ENCODE measurements at regions of chr11 and their contacts with region 1.

Region 1: GRCh38 chr11:58579192-58580129 is 598 bp downstream of the ZFP91 start:
- DNase-seq: peak; percentile 92
- H3K4me3 ChIP-seq: peak overlapping the region; percentile 87
- H3K27ac ChIP-seq: peak overlapping the region; percentile 95
- H3K4me1 ChIP-seq: peaks cover 50% of the 10 kb centered on the region
- CTCF ChIP-seq: peak; percentile 73

Region 2: GRCh38 chr11:57741132-57742086 is 838.1 kb before region 1 on chr11 and contains the start of gene SELENOH:
- CTCF ChIA-PET with region 1: no interaction called
- POLR2A ChIA-PET with region 1: no interaction called
- intact Hi-C with region 1: loop called (anchors 5 kb)
- DNase-seq: peak; percentile 97
- H3K4me3 ChIP-seq: peak within 1 kb of the TSS; percentile 97
- H3K27ac ChIP-seq: peak within 1 kb of the TSS; percentile 77
- H3K4me1 ChIP-seq: peaks cover 20% of the 10 kb centered on the region
- CTCF ChIP-seq: no peak
- total RNA-seq, gene SELENOH: 181 and 229 TPM in 2 replicates

Region 3: DNA sequence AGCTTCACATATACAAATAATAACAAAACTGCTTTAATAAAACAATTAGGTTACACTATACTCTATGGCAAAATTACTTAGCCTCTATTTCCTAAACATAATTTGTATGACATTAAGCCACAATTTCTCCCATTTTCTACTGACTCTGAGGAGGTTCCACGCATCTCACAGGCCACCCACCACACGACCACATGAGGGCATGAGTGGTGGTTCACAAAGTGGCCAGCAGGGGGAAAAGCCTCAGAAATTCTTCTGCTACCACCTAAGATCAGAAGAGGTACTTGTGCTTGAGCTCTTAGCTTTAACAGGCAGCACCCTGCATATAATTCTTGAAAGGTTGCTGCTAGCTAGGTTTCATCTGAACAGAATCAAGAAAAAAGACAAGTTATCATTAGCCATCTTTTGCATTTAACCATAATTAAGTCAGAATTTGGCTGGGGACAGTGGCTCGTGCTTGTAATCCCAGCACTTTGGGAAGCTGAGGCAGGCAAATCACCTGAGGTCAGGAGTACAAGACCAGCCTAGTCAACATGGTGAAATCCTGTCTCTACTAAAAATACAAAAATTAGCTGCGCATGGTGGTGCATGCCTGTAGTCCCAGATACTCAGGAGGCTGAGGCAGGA is 11.5 kb before region 1 on chr11:
- CTCF ChIA-PET with region 1: interaction called, 4 read pairs
- POLR2A ChIA-PET with region 1: interaction called, 21 read pairs
- intact Hi-C with region 1: no loop called
- DNase-seq: peak; percentile 82
- H3K4me3 ChIP-seq: no peak overlapping the region
- H3K27ac ChIP-seq: peak overlapping the region; percentile 26
- H3K4me1 ChIP-seq: peaks cover 45% of the 10 kb centered on the region
- CTCF ChIP-seq: peak; percentile 93

Region 4: DNA sequence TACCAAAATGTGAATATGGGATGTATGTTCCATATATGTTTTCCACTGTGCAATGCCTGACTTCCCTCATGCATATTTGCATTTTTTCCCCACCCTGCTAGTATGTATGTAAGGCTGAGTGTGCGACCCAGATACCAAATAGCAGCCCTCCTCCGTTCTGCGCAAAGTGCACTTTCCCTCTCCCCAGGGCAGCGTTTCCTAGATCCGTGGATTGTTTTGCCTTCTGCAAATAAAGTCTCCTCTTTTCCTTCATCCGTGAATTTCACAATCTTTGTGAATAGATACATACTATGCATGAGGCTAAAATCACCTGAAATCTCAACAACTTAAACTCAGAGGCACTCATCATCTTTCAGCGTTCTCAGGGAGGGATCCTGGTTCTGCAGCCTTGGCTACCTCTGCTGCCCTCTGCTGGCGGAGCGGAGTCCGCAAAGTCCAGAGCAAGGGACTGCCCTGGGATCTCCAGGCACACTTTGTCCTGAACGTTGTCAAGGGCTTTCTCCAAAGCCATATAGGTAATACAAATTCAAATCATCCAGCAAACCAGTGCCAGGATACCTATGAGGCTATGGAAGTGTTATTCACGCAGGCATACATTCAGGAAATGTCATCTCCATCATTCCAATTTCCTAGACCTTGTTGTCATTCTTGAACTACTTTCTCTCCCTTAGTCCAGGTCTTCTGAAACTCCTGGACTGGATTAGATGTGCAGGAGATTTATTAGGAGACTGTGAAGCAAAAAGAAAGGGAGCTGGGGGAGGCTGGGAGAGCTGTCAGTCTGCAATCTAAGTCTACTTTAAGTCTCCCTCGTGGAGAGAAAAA is 96.1 kb after region 1 on chr11:
- CTCF ChIA-PET with region 1: no interaction called
- POLR2A ChIA-PET with region 1: no interaction called
- intact Hi-C with region 1: loop called (anchors 2 kb)
- DNase-seq: peak; percentile 66
- H3K4me3 ChIP-seq: no peak overlapping the region
- H3K27ac ChIP-seq: no peak overlapping the region
- H3K4me1 ChIP-seq: no peaks in the 10 kb centered on the region
- CTCF ChIP-seq: peak; percentile 97

Region 5: GRCh38 chr11:59142530-59143507 is 563.4 kb after region 1 on chr11 and contains the start of gene FAM111A:
- CTCF ChIA-PET with region 1: no interaction called
- POLR2A ChIA-PET with region 1: interaction called, 4 read pairs
- intact Hi-C with region 1: loop called (anchors 2 kb)
- DNase-seq: peak; percentile 81
- H3K4me3 ChIP-seq: peak within 1 kb of the TSS; percentile 90
- H3K27ac ChIP-seq: peak within 1 kb of the TSS; percentile 90
- H3K4me1 ChIP-seq: peaks cover 40% of the 10 kb centered on the region
- CTCF ChIP-seq: peak; percentile 75
- total RNA-seq, gene FAM111A: 80.8 and 83.9 TPM in 2 replicates

Region 6: DNA sequence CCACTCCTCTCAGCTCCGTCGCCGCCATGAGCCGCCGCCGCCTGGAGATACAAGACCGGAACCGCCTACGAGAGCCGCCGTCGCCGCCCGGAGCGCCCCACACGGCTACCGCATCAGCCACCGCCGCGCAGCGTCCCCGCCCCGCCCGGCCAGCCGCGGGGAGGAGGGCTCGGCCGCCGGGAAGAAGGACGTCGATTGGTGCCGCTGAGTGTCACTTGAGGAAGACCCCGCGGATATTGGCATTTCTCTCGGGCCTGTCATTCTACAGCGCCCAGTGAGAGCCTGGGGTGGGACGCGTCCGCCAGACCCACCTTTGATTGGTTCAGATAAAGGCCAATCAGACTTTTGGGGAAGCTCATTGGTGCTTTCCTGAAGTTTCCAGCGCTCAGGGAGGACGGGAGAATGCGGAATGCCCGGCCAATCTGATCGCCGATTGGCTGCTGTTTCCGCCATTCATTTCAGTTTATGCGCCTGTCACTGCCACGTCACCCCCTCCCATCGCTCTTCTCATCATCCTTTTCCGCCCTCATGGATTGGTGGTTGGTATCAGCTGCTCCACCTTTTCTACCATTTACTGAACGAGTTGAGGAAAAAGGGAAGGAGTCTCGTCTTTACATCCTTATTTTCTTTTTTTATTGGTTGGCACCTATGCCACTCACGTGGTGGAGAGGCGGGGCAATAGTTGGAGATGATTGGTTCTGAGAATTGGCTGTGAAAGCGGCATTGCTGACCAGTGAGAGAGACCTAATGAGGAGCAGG is 1036.4 kb after region 1 on chr11 and contains the start of gene OSBP:
- CTCF ChIA-PET with region 1: no interaction called
- POLR2A ChIA-PET with region 1: no interaction called
- intact Hi-C with region 1: loop called (anchors 5 kb)
- DNase-seq: peak; percentile 99
- H3K4me3 ChIP-seq: peak within 1 kb of the TSS; percentile 98
- H3K27ac ChIP-seq: peak within 1 kb of the TSS; percentile 43
- H3K4me1 ChIP-seq: peaks cover 38% of the 10 kb centered on the region
- CTCF ChIP-seq: no peak
- total RNA-seq, gene OSBP: 16.9 and 19.2 TPM in 2 replicates

Measured in OCI-LY7 (cell line).